ENCODE measurements at regions of chr6 and their contacts with region 1.

Region 1: DNA sequence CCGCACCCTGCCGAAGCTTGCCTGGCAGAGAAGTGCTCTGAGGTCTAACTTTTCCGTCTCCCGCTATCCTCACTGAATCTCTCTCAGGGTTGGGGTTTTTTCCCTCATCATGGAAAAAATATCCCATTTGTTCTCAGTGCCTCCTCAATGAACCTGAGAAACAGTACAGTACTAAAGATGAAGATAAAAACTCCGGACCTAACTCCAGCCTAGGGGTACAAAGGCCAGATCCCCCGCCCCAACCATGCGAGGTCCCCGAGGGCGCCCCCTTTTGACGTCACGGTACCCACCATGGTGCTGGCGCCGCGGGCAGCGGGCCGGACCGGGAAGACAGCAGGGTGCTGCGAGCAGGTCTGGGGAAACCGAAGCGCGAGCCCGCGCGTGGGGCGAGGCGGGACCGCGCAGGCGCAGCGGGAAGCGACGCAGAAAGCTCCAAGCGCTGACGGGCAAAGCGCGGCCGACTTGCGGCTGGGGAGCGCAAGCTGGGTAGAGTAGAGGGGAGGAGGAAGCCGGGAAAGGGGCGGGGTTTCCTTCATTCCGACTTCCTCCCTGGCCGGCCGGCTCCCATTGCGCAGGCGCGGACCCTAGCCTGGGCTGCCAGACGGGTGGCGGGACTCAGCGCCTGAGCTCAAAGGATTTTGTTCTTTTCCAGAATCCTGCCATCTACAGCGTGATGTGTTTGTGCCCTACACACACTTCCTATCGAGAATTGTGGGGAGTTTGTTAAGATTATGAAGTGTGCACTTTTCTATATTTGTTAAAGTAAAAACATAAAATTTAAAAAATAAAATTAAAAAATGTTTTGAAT is at the start of gene LSM2:
- DNase-seq: peak; percentile 98
- H3K4me3 ChIP-seq: peak within 1 kb of the TSS; percentile 77 to 88 (median 87)
- H3K27ac ChIP-seq: peak within 1 kb of the TSS; percentile 42
- H3K4me1 ChIP-seq: peaks cover 11% of the 10 kb centered on the region
- H3K27me3 ChIP-seq: no peaks in the 10 kb centered on the region
- CTCF ChIP-seq: peak in 1 of 2 donors; percentile 25
- POLR2A ChIP-seq: peak; percentile 94
- total RNA-seq, gene LSM2: 78.1 and 78.6 TPM in 2 replicates

Region 2: DNA sequence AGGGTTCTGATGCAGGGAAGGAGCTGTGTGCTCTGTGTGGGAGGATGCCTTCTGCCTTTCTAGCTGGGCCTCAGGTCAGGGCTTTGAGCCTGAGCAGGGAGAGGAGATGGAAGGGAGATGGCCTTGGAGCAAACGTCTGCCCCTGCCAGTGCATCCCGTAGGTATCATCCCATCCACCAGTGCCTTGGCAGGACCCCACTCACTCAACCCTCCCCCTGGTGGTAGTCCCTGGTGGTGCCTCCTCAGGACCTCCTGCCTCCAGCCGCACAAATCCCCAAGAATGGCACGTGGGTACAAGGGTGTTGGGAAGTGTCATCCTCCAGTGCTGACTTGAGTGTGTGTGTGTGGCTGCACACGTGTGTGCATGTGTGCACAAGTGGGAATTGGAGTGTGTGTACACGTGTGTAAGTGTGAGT is 331.8 kb before region 1 on chr6:
- CTCF ChIA-PET with region 1: no interaction called
- POLR2A ChIA-PET with region 1: no interaction called
- dilution Hi-C with region 1: no loop called
- intact Hi-C with region 1: no loop called
- DNase-seq: no peak
- H3K4me3 ChIP-seq: no peak overlapping the region
- H3K27ac ChIP-seq: no peak overlapping the region
- H3K4me1 ChIP-seq: no peaks in the 10 kb centered on the region
- H3K27me3 ChIP-seq: peaks cover 6 to 18% of the 10 kb centered on the region in 2 experiments
- CTCF ChIP-seq: peak in 1 of 2 donors; percentile 27
- POLR2A ChIP-seq: no peak

Region 3: GRCh38 chr6:31776989-31777666 is 29.5 kb before region 1 on chr6 and contains the start of gene VWA7:
- CTCF ChIA-PET with region 1: interaction called, 12 read pairs
- POLR2A ChIA-PET with region 1: interaction called, 3 read pairs
- dilution Hi-C with region 1: no loop called
- intact Hi-C with region 1: no loop called
- DNase-seq: peak; percentile 35
- H3K4me3 ChIP-seq: no peak within 1 kb of the TSS
- H3K27ac ChIP-seq: no peak within 1 kb of the TSS
- H3K4me1 ChIP-seq: peaks cover 4% of the 10 kb centered on the region
- H3K27me3 ChIP-seq: no peaks in the 10 kb centered on the region
- CTCF ChIP-seq: no peak
- POLR2A ChIP-seq: no peak
- total RNA-seq, gene VWA7: 0.25 and 0.51 TPM in 2 replicates

Region 4: GRCh38 chr6:31822036-31822821 is 15.6 kb after region 1 on chr6:
- CTCF ChIA-PET with region 1: interaction called, 10 read pairs
- POLR2A ChIA-PET with region 1: interaction called, 32 read pairs
- dilution Hi-C with region 1: no loop called
- intact Hi-C with region 1: no loop called
- DNase-seq: peak; percentile 77
- H3K4me3 ChIP-seq: peak overlapping the region; percentile 24 to 73 (median 44)
- H3K27ac ChIP-seq: peak overlapping the region; percentile 79
- H3K4me1 ChIP-seq: peaks cover 30% of the 10 kb centered on the region
- H3K27me3 ChIP-seq: no peaks in the 10 kb centered on the region
- CTCF ChIP-seq: no peak
- POLR2A ChIP-seq: peak; percentile 64

Region 5: GRCh38 chr6:32076321-32076809 is 269.7 kb after region 1 on chr6:
- CTCF ChIA-PET with region 1: no interaction called
- POLR2A ChIA-PET with region 1: no interaction called
- dilution Hi-C with region 1: no loop called
- intact Hi-C with region 1: no loop called
- DNase-seq: no peak
- H3K4me3 ChIP-seq: no peak overlapping the region
- H3K27ac ChIP-seq: no peak overlapping the region
- H3K4me1 ChIP-seq: no peaks in the 10 kb centered on the region
- H3K27me3 ChIP-seq: peaks cover 0 to 4% of the 10 kb centered on the region in 2 experiments
- CTCF ChIP-seq: no peak
- POLR2A ChIP-seq: no peak

Region 6: GRCh38 chr6:32127717-32128592 is 321.3 kb after region 1 on chr6 and contains the start of gene ATF6B:
- CTCF ChIA-PET with region 1: no interaction called
- POLR2A ChIA-PET with region 1: no interaction called
- dilution Hi-C with region 1: no loop called
- intact Hi-C with region 1: no loop called
- DNase-seq: peak; percentile 99
- H3K4me3 ChIP-seq: peak within 1 kb of the TSS; percentile 71 to 99 (median 84)
- H3K27ac ChIP-seq: peak within 1 kb of the TSS; percentile 83
- H3K4me1 ChIP-seq: peaks cover 20% of the 10 kb centered on the region
- H3K27me3 ChIP-seq: no peaks in the 10 kb centered on the region
- CTCF ChIP-seq: no peak
- POLR2A ChIP-seq: no peak
- total RNA-seq, gene ATF6B: 102 and 106 TPM in 2 replicates